ENCODE measurements at regions of chr2 and their contacts with region 1.

Region 1: DNA sequence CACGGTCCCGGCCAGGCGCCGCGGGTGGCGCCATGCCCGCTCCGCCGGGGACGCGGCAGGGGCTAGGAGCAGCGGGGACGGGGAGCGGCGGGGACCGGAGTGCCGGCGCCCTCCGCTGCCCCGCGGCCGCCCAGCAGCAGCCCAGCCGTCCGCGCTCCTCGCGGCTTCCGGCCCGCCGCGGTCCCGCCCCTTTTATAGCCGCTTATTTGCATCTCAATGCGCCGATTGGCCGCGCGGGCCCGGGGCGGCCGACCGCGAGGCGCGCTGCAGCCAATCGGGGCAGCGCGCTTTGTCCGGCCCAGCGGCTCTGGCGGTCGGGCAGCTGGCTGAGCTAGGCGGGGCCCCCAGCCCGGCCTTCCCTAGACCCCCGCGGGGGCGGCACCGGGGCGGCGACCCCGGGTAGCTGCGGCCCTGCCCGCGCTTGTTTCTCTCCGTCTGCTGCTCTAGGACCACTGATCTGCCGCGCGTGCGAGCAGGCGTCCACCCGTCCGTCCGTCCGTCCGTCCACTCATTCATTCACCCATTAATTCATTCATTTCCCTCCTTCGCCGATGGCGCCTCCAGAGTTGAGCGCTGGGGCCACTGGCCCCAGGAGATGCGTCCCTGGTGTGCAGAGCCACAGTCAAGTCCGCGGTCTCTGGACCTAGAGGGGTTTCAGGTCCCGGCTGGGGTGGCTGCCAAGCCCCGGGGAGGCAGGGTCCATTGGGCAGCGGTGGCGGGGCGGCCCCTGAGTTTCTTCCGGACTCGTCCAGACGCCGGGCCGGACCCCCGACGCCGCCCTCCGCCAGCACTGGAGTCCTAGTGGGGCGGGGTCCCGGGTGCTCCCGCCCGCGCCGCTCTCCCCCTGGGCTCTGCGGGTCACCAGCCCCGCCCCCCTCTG is at the start of gene HES6:
- DNase-seq: peak; percentile 75 to 98 (median 88)

Region 2: GRCh38 chr2:238060542-238061314 is 179.4 kb before region 1 on chr2 and contains the start of gene SCLY:
- intact Hi-C with region 1: no loop called
- DNase-seq: peak; percentile 97 to 100 (median 98)

Region 3: GRCh38 chr2:238158527-238159070 is 81.5 kb before region 1 on chr2 and contains the start of gene ERFE:
- intact Hi-C with region 1: no loop called
- DNase-seq: peak in 5 of 10 donors; percentile 34 to 84 (median 72)

Region 4: GRCh38 chr2:238203094-238203972 is 36.8 kb before region 1 on chr2 and contains the start of gene ILKAP:
- intact Hi-C with region 1: loop called (anchors 2 kb)
- DNase-seq: peak; percentile 73 to 98 (median 86)